K562 (cell line): ENCODE measurements at regions of chr1 and their contacts with region 1.

Region 1: GRCh38 chr1:108643492-108644335 is 17.2 kb downstream of the HENMT1 start:
- DNase-seq: peak; percentile 31 to 80 (median 46)
- ATAC-seq: peak; percentile 85
- H3K4me3 ChIP-seq: no peak overlapping the region
- H3K27ac ChIP-seq: no peak overlapping the region
- H3K4me1 ChIP-seq: peaks cover 0 to 8% of the 10 kb centered on the region in 2 experiments; a peak in 3 of 5 replicates
- H3K27me3 ChIP-seq: no peaks in the 10 kb centered on the region; a peak in 1 of 5 replicates
- CTCF ChIP-seq: peak; percentile 58 to 91 (median 70); a peak in 5 of 6 replicates
- EP300 ChIP-seq: no peak
- POLR2A ChIP-seq: no peak
- RAD21 ChIP-seq: peak; percentile 94 to 97

Region 2: GRCh38 chr1:107782217-107782845 is 861.4 kb before region 1 on chr1:
- CTCF ChIA-PET with region 1: interaction called, 5 read pairs
- POLR2A ChIA-PET with region 1: no interaction called
- in situ Hi-C with region 1: loop called (anchors 25 kb)
- intact Hi-C with region 1: no loop called
- DNase-seq: peak; percentile 35 to 75 (median 57)
- ATAC-seq: peak; percentile 89
- H3K4me3 ChIP-seq: no peak overlapping the region
- H3K27ac ChIP-seq: no peak overlapping the region
- H3K4me1 ChIP-seq: no peaks in the 10 kb centered on the region
- H3K27me3 ChIP-seq: no peaks in the 10 kb centered on the region
- CTCF ChIP-seq: peak; percentile 58 to 84 (median 60); a peak in 5 of 6 replicates
- EP300 ChIP-seq: no peak
- POLR2A ChIP-seq: no peak
- RAD21 ChIP-seq: peak; percentile 92 to 95

Region 3: DNA sequence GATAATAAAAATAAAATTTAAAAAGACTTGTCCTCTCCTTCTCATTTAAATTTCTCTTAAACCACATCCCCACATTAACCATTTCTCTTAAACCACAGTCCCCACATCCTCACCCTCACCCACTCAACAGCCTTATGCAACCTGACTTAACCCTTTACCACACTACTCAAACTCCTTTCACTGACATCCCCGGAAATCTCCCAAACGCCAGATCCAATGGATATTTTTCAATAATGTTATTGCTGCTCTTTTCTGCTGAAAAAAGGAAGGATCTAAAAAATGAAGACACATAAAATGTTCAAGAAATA is 138.0 kb before region 1 on chr1:
- CTCF ChIA-PET with region 1: interaction called, 65 read pairs
- POLR2A ChIA-PET with region 1: interaction called, 3 read pairs
- in situ Hi-C with region 1: loop called (anchors 5 kb)
- intact Hi-C with region 1: no loop called
- DNase-seq: no peak
- ATAC-seq: no peak
- H3K4me3 ChIP-seq: no peak overlapping the region
- H3K27ac ChIP-seq: no peak overlapping the region
- H3K4me1 ChIP-seq: peaks cover 0 to 18% of the 10 kb centered on the region in 2 experiments; a peak in 4 of 5 replicates
- H3K27me3 ChIP-seq: no peaks in the 10 kb centered on the region
- CTCF ChIP-seq: no peak
- EP300 ChIP-seq: no peak
- POLR2A ChIP-seq: no peak
- RAD21 ChIP-seq: no peak

Region 4: DNA sequence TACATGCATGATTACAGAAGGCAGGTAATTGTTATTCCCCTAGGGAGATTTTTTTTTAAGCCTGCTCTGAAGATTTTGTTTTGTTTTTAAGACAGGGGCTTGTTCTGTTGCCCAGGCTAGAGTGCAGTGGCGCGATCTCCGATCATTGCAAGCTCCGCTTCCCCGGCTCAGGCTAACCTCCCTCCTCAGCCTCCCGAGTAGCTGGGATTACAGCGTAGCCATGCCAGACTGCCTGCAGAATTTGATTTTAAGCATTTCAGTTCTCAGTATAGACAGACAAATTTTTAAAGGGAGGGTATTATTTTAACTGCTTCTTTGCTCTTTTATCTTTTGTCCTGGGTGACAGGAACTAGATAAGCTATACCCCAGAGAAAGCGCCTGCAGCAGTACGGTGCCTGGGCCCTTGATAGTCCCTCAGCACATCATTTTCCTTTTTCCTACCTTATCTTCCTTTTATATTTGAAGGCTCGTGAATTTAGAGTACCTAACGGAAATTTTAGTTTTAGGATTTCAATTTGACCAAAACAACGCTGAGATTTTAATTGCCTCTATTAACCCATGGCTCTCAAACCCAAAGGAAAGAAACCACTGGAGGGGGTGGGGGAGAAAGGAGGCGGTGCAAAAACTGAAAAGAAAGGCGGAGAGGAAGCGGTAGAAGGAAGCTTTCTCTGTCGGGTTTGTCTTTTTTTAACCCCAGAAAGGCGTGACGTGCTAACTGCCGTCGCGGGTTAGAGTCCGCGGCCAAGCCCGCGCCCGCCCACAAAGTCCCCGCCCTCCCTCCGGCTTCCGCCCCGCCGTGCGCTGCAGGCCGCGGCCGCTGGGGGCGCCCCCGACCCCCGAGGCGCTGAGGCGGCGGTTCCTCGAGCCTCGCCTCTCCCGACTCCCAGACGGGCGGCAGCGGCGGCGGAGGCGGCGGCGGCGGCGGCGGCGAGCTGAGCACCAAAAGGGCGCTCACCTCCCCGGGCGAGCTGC is 84.2 kb before region 1 on chr1 and contains the start of gene EEIG2:
- CTCF ChIA-PET with region 1: no interaction called
- POLR2A ChIA-PET with region 1: no interaction called
- in situ Hi-C with region 1: no loop called
- intact Hi-C with region 1: loop called (anchors 2 kb)
- DNase-seq: peak; percentile 94 to 96 (median 96)
- ATAC-seq: peak; percentile 84
- H3K4me3 ChIP-seq: peak within 1 kb of the TSS; percentile 57
- H3K27ac ChIP-seq: peak within 1 kb of the TSS; percentile 78
- H3K4me1 ChIP-seq: peaks cover 25 to 51% of the 10 kb centered on the region in 2 experiments
- H3K27me3 ChIP-seq: no peaks in the 10 kb centered on the region
- CTCF ChIP-seq: peak; percentile 75 to 91 (median 84)
- EP300 ChIP-seq: peak; percentile 41
- POLR2A ChIP-seq: no peak; the same call in 1 of the 2 replicates
- RAD21 ChIP-seq: peak; percentile 42 to 49
- polyA plus RNA-seq, gene EEIG2: 6.1 to 8.0 TPM

Region 5: GRCh38 chr1:108708691-108709660 is 65.3 kb after region 1 on chr1:
- CTCF ChIA-PET with region 1: no interaction called
- POLR2A ChIA-PET with region 1: no interaction called
- in situ Hi-C with region 1: no loop called
- intact Hi-C with region 1: loop called (anchors 2 kb)
- DNase-seq: peak in 3 of 4 experiments; percentile 29 to 80 (median 59)
- ATAC-seq: peak; percentile 91
- H3K4me3 ChIP-seq: no peak overlapping the region
- H3K27ac ChIP-seq: no peak overlapping the region
- H3K4me1 ChIP-seq: no peaks in the 10 kb centered on the region
- H3K27me3 ChIP-seq: peaks cover 0 to 3% of the 10 kb centered on the region in 2 experiments; a peak in 1 of 5 replicates
- CTCF ChIP-seq: peak; percentile 82 to 89 (median 86)
- EP300 ChIP-seq: no peak
- POLR2A ChIP-seq: no peak
- RAD21 ChIP-seq: peak; percentile 50 to 80

Region 6: DNA sequence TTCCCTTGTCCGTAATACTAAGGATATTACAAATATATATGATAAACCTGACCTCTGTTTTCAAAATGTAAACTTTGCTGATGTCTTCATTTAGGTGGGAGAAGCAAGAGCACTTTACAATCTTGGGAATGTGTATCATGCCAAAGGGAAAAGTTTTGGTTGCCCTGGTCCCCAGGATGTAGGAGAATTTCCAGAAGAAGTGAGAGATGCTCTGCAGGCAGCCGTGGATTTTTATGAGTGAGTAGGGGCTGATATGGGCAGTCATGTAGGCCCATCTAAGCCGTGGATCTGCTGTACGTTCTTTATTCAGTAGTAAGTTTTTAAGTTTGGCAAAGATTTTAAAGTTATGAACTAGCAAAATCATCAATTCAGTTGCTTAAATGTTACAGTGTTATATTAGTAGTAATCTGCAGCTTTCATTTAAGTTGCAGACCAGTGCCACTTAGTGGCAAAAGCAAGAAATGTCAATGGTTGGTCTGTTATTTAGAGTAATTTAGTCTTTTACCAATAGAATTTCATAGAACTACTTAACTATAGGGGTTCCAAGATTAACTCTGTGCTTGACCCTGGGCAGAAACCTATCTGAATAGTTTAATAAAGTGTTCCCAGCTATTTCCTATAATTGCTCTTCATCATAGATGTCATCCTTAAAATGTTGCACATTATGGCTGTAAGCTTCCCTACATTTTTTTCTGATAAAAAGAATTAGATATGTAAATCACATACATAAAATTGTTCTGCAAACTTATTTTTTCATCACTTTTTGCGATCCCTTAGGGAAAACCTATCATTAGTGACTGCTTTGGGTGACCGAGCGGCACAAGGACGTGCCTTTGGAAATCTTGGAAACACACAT is 254.4 kb after region 1 on chr1:
- CTCF ChIA-PET with region 1: no interaction called
- POLR2A ChIA-PET with region 1: no interaction called
- in situ Hi-C with region 1: no loop called
- intact Hi-C with region 1: loop called (anchors 5 kb)
- DNase-seq: peak in 2 of 4 experiments; percentile 56 to 72
- ATAC-seq: peak; percentile 91
- H3K4me3 ChIP-seq: no peak overlapping the region
- H3K27ac ChIP-seq: no peak overlapping the region
- H3K4me1 ChIP-seq: no peaks in the 10 kb centered on the region
- H3K27me3 ChIP-seq: no peaks in the 10 kb centered on the region
- CTCF ChIP-seq: peak; percentile 61 to 94 (median 67); a peak in 5 of 6 replicates
- EP300 ChIP-seq: no peak
- POLR2A ChIP-seq: no peak
- RAD21 ChIP-seq: peak; percentile 89 to 96